K562 (cell line): ENCODE measurements at regions of chr21 and their contacts with region 1.

Region 1: DNA sequence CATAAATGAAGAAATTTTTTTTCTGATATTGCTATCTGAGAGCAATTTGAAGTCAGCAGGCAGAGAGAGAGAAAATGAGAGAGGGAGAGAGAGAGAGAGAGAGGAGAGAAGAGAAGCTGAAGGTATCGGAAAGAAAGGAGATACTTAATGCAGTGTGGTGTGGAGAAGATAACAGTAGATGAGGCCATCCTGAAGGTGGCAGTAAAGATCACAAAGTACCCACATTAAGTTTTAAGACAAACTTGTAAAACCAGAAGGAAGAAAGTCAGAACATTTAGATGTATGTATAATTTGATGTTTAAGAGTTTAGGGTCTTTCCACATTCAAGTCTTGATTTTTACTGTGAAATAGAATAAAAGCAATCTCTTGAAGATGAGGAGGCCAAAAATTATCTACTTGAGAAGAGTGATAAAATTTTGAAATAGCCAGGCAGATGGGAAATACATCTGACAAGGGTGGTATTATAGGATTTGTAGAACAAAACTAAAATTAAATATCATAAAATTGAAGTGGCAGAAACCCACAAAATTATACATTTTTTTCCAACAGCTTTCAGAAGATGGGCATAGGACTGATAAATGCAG is 1753.4 kb downstream of the MRPL39 start:
- DNase-seq: peak; percentile 16 to 64 (median 33)
- ATAC-seq: peak; percentile 91
- H3K4me3 ChIP-seq: no peak overlapping the region
- H3K27ac ChIP-seq: no peak overlapping the region
- H3K4me1 ChIP-seq: no peaks in the 10 kb centered on the region
- H3K27me3 ChIP-seq: no peaks in the 10 kb centered on the region
- CTCF ChIP-seq: peak; percentile 6 to 55 (median 39); a peak in 4 of 6 replicates
- EP300 ChIP-seq: no peak
- POLR2A ChIP-seq: no peak
- RAD21 ChIP-seq: peak; percentile 69 to 85

Region 2: GRCh38 chr21:23968722-23969647 is 115.1 kb after region 1 on chr21:
- CTCF ChIA-PET with region 1: interaction called, 14 read pairs
- POLR2A ChIA-PET with region 1: no interaction called
- in situ Hi-C with region 1: loop called (anchors 10 kb)
- intact Hi-C with region 1: loop called (anchors 1 kb)
- DNase-seq: peak; percentile 51 to 77 (median 52)
- ATAC-seq: peak; percentile 98
- H3K4me3 ChIP-seq: no peak overlapping the region
- H3K27ac ChIP-seq: no peak overlapping the region
- H3K4me1 ChIP-seq: no peaks in the 10 kb centered on the region
- H3K27me3 ChIP-seq: no peaks in the 10 kb centered on the region
- CTCF ChIP-seq: peak; percentile 71 to 79 (median 75)
- EP300 ChIP-seq: no peak
- POLR2A ChIP-seq: no peak
- RAD21 ChIP-seq: peak; percentile 81 to 94

Region 3: DNA sequence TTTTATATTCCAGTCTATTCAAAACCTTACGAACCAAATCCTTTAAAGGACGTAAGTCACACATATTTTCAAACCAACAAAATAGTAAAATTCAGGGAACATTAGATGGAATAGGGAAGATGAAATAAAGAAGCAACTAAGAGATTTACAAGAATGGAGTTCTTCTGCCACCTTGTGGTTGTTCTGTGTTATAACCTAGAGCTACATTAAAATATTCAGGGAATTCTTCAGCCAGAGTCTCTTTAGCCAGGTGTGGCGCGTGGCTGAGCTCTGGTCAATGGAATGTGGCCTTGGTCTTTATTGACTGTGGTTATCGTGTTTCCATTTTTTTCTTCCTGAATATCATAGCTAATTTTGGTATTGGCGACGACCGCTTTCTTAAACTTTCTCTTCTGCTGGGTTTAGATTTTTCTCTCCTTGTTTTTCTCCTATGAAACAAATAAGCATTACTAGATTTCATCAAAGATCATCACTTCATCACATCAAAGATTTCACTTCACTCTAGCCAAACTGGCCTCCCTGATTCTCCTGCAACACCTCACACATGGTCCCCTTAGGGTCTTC is 1532.1 kb after region 1 on chr21:
- CTCF ChIA-PET with region 1: no interaction called
- POLR2A ChIA-PET with region 1: no interaction called
- in situ Hi-C with region 1: no loop called
- intact Hi-C with region 1: loop called (anchors 10 kb)
- DNase-seq: peak; percentile 42 to 69 (median 50)
- ATAC-seq: peak; percentile 83
- H3K4me3 ChIP-seq: no peak overlapping the region
- H3K27ac ChIP-seq: no peak overlapping the region
- H3K4me1 ChIP-seq: no peaks in the 10 kb centered on the region
- H3K27me3 ChIP-seq: no peaks in the 10 kb centered on the region
- CTCF ChIP-seq: peak; percentile 40 to 80 (median 60); a peak in 5 of 6 replicates
- EP300 ChIP-seq: no peak
- POLR2A ChIP-seq: no peak
- RAD21 ChIP-seq: peak; percentile 78 to 87